Activated CD4-positive, alpha-beta T cell treated with anti-CD3 and anti-CD28 coated beads for 36 hours (primary cell): ENCODE measurements at regions of chr5 and their contacts with region 1.

Region 1: GRCh38 chr5:66144074-66144833 is at the start of gene SREK1:
- DNase-seq: peak; percentile 95
- ATAC-seq: peak; percentile 90
- H3K4me3 Mint-ChIP-seq: peak within 1 kb of the TSS; percentile 96
- H3K27ac Mint-ChIP-seq: peak within 1 kb of the TSS; percentile 99
- H3K4me1 Mint-ChIP-seq: peaks cover 39% of the 10 kb centered on the region
- H3K27me3 Mint-ChIP-seq: no peaks in the 10 kb centered on the region
- total RNA-seq, gene SREK1: 56.1 to 61.3 TPM

Region 2: GRCh38 chr5:64768358-64769312 is 1375.6 kb before region 1 on chr5 and contains the starts of genes CWC27 and SREK1IP1:
- CTCF ChIA-PET with region 1: no interaction called
- POLR2A ChIA-PET with region 1: no interaction called
- intact Hi-C with region 1: loop called in 1 of 2 experiments (anchors 5 kb)
- DNase-seq: peak; percentile 89
- ATAC-seq: peak; percentile 97
- H3K4me3 Mint-ChIP-seq: peak within 1 kb of the TSS; percentile 91
- H3K27ac Mint-ChIP-seq: peak within 1 kb of the TSS; percentile 95
- H3K4me1 Mint-ChIP-seq: peaks cover 45% of the 10 kb centered on the region
- H3K27me3 Mint-ChIP-seq: no peaks in the 10 kb centered on the region
- total RNA-seq, gene CWC27: 35.4 to 35.8 TPM
- total RNA-seq, gene SREK1IP1: 27.8 TPM

Region 3: DNA sequence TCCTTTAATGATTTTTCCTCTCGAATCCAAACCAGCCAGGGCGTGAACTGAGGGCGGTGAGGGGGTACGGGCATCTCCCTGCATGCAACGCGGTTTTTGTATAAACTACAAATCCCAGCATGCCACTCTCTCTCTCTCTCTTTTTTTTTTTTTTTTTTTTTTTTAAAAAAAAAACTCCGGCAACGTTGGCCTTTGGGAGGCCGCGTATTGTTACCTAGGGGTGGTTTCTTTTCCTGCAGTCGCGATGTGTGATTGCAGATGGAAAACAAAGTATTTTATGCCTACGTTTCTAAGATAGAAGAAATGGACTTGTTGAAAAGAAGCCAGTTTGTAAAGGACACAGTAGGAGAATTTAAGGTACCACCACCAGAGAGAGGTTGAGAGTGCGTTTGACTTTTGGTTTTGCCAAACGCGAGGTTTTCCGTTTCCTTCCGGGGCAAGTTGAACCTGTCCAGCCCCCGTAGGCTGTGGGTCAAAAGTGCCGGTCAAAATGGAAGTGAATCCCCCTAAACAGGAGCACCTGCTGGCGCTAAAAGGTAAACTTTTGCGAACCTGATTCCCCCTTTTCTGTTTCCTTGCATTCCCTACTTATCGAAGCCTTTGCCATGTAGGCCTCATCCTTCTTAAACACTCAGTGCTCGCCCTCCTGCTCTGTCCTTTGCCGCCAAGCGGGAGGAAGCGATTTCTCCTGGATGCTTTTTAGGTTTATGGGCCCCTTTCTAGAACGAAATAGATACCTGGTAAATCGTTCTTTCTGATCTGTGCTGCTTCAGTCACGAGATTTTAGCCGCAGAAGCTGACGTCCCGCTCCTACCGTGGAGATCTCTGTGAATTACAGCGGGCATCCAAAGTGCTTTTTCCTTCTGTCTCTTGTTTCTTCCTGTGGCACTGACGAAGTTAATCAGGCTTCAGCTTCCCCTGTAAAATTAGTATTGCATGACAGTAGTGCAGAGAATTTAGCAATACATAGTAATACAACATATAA is 519.4 kb before region 1 on chr5 and contains the starts of genes SHLD3 and TRAPPC13:
- CTCF ChIA-PET with region 1: no interaction called
- POLR2A ChIA-PET with region 1: interaction called, 4 read pairs
- intact Hi-C with region 1: loop called (anchors 1 kb)
- DNase-seq: peak; percentile 88
- ATAC-seq: peak; percentile 78
- H3K4me3 Mint-ChIP-seq: peak within 1 kb of the TSS; percentile 85
- H3K27ac Mint-ChIP-seq: peak within 1 kb of the TSS; percentile 96
- H3K4me1 Mint-ChIP-seq: peaks cover 44% of the 10 kb centered on the region
- H3K27me3 Mint-ChIP-seq: no peaks in the 10 kb centered on the region
- total RNA-seq, gene SHLD3: 3.5 to 4.0 TPM
- total RNA-seq, gene TRAPPC13: 11.2 to 20.7 TPM

Region 4: DNA sequence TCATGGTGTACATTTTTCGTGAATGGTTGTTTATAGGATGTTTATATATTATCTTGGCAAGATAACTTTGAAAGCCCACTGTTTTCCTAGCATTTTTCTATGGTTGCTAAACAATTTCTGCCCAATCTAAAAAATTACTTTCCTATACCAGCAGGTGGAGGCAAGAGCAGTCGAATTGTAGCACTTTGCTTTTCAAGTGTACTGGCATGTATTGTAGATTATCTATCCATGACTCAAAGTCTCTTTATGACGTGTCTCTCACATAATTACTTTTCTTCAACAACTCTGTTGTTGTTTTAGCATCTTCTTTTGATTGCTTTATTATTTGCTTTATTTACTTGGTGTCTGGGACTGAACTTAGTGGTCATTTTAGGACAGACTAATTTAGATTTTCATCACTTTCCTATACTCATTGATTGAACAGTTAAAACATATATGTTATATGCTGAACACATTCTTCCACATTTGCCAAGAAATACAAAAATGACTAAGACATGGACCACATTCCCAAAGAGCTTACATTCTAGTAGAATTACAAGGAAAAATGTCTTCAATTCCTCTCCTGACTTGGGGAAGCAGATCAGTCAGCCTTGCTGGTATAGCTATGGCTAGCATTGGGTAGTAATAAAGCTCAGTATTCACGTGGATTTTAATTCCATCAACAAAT is 401.6 kb before region 1 on chr5:
- CTCF ChIA-PET with region 1: no interaction called
- POLR2A ChIA-PET with region 1: no interaction called
- intact Hi-C with region 1: loop called (anchors 1 to 5 kb)
- DNase-seq: peak; percentile 47
- ATAC-seq: peak; percentile 95
- H3K4me3 Mint-ChIP-seq: no peak overlapping the region
- H3K27ac Mint-ChIP-seq: no peak overlapping the region
- H3K4me1 Mint-ChIP-seq: peaks cover 15% of the 10 kb centered on the region
- H3K27me3 Mint-ChIP-seq: no peaks in the 10 kb centered on the region

Region 5: DNA sequence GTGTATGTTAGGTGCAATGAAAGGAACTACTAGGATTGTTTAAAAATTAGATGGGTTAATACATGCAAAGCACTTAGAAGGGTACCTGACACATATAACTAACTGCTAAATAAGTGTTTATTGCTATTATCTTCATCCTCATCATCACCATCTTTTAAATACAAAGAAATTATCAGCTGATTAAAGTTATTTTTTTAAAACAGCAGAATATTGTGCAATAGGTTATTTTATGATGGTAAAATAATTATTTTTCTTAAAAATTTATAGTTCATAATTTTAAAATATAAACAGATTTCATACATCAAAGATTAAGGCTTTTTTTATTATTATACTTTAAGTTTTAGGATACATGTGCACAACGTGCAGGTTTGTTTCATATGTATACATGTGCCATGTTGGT is 87.0 kb before region 1 on chr5:
- CTCF ChIA-PET with region 1: no interaction called
- POLR2A ChIA-PET with region 1: no interaction called
- intact Hi-C with region 1: no loop called
- DNase-seq: no peak
- ATAC-seq: no peak
- H3K4me3 Mint-ChIP-seq: no peak overlapping the region
- H3K27ac Mint-ChIP-seq: no peak overlapping the region
- H3K4me1 Mint-ChIP-seq: peaks cover 23% of the 10 kb centered on the region
- H3K27me3 Mint-ChIP-seq: no peaks in the 10 kb centered on the region

Region 6: GRCh38 chr5:66074901-66075300 is 69.4 kb before region 1 on chr5:
- CTCF ChIA-PET with region 1: no interaction called
- POLR2A ChIA-PET with region 1: no interaction called
- intact Hi-C with region 1: loop called in 1 of 2 experiments (anchors 5 kb)
- DNase-seq: no peak
- ATAC-seq: no peak
- H3K4me3 Mint-ChIP-seq: no peak overlapping the region
- H3K27ac Mint-ChIP-seq: no peak overlapping the region
- H3K4me1 Mint-ChIP-seq: peaks cover 9% of the 10 kb centered on the region
- H3K27me3 Mint-ChIP-seq: no peaks in the 10 kb centered on the region